K562 (cell line): ENCODE measurements at regions of chr16 and their contacts with region 1.

Region 1: DNA sequence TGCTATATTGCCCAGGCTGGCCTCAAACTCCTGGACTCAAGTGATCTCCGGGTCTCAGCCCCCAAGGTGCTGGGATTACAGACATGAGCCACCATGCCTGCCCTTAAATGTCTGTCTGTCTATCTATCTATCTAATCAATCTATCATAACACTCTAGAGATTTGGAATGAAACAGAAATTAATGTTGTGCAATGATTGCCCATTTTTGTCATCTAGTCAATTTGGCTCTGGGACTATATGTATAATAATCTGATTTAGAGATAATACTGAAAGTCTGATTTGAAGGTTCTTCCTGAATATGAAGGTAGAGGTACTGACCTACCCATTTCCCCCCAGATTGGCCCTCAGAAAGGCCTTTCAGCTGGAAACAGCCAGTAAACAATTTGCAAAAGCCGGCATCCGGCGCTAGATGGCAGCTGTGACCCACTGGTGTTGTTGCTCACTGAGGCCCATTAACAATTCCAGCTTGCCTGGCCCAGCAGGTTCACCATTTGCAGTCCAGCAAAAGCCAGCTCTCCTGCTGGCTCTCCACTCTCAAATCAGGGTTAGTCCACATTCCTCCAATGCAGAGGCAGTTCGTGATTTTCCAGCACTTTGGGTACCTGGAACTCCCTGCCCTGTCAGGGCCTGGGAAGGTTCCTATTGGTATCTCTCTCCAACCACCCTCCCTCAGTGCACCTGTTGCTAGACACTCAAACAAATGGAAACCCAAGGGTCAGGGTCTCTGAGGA is 22.9 kb upstream of the C16orf87 start:
- DNase-seq: peak; percentile 60 to 77 (median 68)
- ATAC-seq: peak; percentile 92
- H3K4me3 ChIP-seq: no peak overlapping the region
- H3K27ac ChIP-seq: no peak overlapping the region
- H3K4me1 ChIP-seq: peaks cover 0 to 6% of the 10 kb centered on the region in 2 experiments; a peak in 1 of 5 replicates
- H3K27me3 ChIP-seq: peaks cover 0 to 10% of the 10 kb centered on the region in 2 experiments; a peak in 3 of 5 replicates
- CTCF ChIP-seq: peak; percentile 89 to 94 (median 91)
- EP300 ChIP-seq: no peak
- POLR2A ChIP-seq: no peak
- RAD21 ChIP-seq: peak; percentile 86 to 94

Region 2: DNA sequence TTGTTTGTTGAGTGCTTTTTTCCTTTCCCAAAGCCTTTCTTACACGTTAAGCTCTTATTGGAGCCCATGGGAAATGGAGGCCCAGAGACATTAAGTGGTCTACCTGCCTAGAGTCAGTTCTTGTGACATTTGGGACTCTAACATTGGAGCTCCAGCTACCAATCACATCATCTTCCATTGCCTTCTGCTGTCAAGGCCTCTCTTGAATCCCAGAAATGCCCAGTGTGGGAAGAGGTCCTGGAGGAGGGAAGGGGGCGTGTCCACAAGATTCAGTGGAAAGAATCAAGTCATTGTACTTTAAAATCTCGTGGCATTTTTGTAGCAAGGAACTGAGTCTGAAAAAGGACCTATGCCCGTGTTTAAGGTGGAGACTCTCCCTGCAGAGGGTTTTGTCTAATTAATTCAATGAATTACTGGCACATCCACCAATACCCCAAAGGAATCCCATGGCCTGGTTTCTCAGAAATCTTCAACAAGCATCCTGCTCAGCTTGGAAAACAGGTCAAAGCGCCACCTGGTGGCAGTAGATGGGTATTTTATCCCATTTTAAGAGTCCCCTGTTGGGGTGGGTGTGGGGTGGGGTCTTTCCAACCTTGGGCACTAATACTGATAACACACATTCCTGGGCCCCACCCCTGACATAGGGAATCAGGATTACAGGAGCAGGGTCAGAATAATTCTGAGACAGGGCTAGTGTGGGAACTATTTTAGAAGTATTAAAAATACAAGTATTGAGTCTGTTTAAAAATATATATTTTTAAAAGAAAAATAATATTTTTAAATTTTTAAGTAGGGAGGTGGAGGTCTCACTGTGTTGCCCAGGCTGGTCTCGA is 54.9 kb after region 1 on chr16:
- CTCF ChIA-PET with region 1: interaction called, 24 read pairs
- POLR2A ChIA-PET with region 1: interaction called, 3 read pairs
- in situ Hi-C with region 1: no loop called
- intact Hi-C with region 1: loop called (anchors 1 kb)
- DNase-seq: peak; percentile 67 to 78 (median 73)
- ATAC-seq: peak; percentile 82
- H3K4me3 ChIP-seq: no peak overlapping the region
- H3K27ac ChIP-seq: no peak overlapping the region
- H3K4me1 ChIP-seq: no peaks in the 10 kb centered on the region
- H3K27me3 ChIP-seq: no peaks in the 10 kb centered on the region
- CTCF ChIP-seq: peak; percentile 54 to 73 (median 64); a peak in 5 of 6 replicates
- EP300 ChIP-seq: no peak
- POLR2A ChIP-seq: no peak
- RAD21 ChIP-seq: peak; percentile 53 to 71

Region 3: GRCh38 chr16:46929378-46930332 is 75.8 kb after region 1 on chr16:
- CTCF ChIA-PET with region 1: interaction called, 9 read pairs
- POLR2A ChIA-PET with region 1: interaction called, 3 read pairs
- in situ Hi-C with region 1: loop called (anchors 5 kb)
- intact Hi-C with region 1: loop called (anchors 1 kb)
- DNase-seq: peak; percentile 79 to 91 (median 88)
- ATAC-seq: peak; percentile 96
- H3K4me3 ChIP-seq: no peak overlapping the region
- H3K27ac ChIP-seq: no peak overlapping the region
- H3K4me1 ChIP-seq: peaks cover 0 to 12% of the 10 kb centered on the region in 2 experiments; a peak in 3 of 5 replicates
- H3K27me3 ChIP-seq: no peaks in the 10 kb centered on the region; a peak in 1 of 5 replicates
- CTCF ChIP-seq: peak; percentile 84 to 93 (median 88)
- EP300 ChIP-seq: no peak
- POLR2A ChIP-seq: no peak
- RAD21 ChIP-seq: peak; percentile 46 to 76

Region 4: DNA sequence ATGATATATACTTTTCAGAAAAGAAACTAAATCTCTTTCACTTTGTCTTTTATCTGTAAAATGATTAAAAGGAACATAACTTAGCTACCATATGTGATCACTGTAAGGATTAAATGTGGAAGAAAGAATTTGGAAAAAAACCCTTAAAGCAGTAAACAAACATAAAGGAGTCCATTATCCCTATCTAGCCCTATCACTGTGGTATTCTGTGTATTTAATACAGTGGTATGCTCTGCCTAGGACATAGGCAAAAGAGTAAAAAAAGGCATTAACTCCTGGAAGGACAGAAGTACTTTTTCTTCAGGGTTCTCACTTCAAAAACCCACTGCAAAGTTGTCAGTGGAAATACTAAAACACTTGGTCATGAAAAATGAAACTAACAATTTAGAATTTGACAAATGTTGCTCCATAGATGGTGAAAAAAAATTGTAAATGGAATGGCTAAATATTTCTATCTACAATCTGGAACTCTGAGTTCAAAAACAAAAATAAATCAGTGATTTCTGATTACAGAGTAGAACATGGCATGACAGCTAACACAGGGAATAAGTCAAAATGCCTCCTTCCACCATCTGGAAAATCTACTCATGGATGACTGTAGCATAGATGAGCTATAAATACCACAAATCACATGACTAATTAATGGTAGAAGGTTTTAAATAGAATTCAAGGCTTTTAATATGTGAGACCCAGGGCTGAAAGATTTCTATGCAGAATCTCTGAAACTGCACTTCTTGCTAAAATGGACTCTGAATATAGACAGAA is 466.9 kb after region 1 on chr16:
- CTCF ChIA-PET with region 1: no interaction called
- POLR2A ChIA-PET with region 1: no interaction called
- in situ Hi-C with region 1: no loop called
- intact Hi-C with region 1: no loop called
- DNase-seq: no peak
- ATAC-seq: no peak
- H3K4me3 ChIP-seq: no peak overlapping the region
- H3K27ac ChIP-seq: no peak overlapping the region
- H3K4me1 ChIP-seq: no peaks in the 10 kb centered on the region
- H3K27me3 ChIP-seq: no peaks in the 10 kb centered on the region
- CTCF ChIP-seq: no peak
- EP300 ChIP-seq: no peak
- POLR2A ChIP-seq: no peak
- RAD21 ChIP-seq: no peak